Right ventricle myocardium superior (tissue), 1 donor: ENCODE measurements at regions of chr4 and their contacts with region 1.

Region 1: GRCh38 chr4:99885063-99885664 is 9.1 kb downstream of the LAMTOR3 start:
- DNase-seq: no peak
- ATAC-seq: peak; percentile 51

Region 2: GRCh38 chr4:99552872-99553271 is 332.3 kb before region 1 on chr4:
- intact Hi-C with region 1: loop called (anchors 5 kb)
- DNase-seq: no peak
- ATAC-seq: no peak

Region 3: DNA sequence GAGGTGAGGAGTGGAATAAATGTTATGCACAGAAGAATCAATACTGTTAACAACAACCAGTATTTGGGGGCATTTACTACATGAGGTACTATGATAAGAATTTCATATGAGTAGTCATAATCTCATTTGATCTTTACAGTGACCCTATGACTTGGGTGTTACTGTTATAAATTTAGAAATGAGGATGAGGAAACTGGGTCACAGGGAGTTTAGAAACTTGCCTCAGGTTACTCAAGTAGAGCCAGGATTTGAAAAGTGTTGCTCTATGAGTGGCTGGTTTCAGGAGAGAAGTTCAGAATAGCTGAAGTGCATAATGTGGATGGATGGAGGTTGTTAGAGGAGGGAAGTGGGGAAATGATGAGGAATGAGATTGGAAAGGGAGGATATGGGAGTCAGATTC is 321.7 kb after region 1 on chr4:
- intact Hi-C with region 1: no loop called
- DNase-seq: no peak
- ATAC-seq: no peak